Naive thymus-derived CD4-positive, alpha-beta T cell (primary cell): ENCODE measurements at regions of chrX and their contacts with region 1.

Region 1: DNA sequence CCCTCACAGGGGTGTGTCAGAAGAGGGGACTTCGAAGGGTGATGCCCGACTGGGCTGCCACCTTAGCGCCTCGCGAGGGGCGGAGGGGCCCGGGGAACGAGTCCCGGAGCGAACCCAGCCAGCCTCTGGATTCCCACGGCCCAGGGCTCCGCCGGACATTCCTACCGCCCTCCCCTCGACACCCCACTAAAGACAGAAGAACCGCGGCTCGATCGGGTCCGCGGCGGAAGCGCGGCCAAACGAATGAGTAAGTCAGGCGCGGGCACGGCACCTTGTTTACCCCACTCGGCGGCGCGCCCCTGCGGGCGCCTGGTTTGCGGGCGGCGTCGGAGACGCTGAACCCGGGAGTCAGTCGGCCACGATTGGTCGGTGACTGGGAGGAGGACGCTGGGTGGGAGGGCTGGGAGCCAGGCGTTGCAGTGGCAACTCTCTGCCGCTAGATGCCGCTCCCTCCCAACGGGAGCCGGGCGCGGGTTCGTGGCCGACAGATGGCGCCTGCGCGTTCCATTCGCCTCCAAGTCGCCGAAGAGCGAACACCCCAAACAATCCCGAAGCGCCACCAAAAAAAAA is 1.4 kb upstream of the STAG2 start:
- DNase-seq: peak; percentile 75 to 91 (median 87)
- ATAC-seq: peak; percentile 82
- H3K4me3 ChIP-seq: peak overlapping the region; percentile 87
- H3K4me3 Mint-ChIP-seq: peak overlapping the region; percentile 88 to 99 (median 97)
- H3K27ac ChIP-seq: peak overlapping the region; percentile 99
- H3K27ac Mint-ChIP-seq: peak overlapping the region; percentile 97 to 100 (median 98)
- H3K4me1 ChIP-seq: peaks cover under 1 to 2% of the 10 kb centered on the region in 2 donors
- H3K4me1 Mint-ChIP-seq: peaks cover 6 to 28% (median 17%) of the 10 kb centered on the region in 7 donors
- H3K27me3 ChIP-seq: no peaks in the 10 kb centered on the region
- H3K27me3 Mint-ChIP-seq: peaks cover 0 to 4% (median 0%) of the 10 kb centered on the region in 5 donors

Region 2: DNA sequence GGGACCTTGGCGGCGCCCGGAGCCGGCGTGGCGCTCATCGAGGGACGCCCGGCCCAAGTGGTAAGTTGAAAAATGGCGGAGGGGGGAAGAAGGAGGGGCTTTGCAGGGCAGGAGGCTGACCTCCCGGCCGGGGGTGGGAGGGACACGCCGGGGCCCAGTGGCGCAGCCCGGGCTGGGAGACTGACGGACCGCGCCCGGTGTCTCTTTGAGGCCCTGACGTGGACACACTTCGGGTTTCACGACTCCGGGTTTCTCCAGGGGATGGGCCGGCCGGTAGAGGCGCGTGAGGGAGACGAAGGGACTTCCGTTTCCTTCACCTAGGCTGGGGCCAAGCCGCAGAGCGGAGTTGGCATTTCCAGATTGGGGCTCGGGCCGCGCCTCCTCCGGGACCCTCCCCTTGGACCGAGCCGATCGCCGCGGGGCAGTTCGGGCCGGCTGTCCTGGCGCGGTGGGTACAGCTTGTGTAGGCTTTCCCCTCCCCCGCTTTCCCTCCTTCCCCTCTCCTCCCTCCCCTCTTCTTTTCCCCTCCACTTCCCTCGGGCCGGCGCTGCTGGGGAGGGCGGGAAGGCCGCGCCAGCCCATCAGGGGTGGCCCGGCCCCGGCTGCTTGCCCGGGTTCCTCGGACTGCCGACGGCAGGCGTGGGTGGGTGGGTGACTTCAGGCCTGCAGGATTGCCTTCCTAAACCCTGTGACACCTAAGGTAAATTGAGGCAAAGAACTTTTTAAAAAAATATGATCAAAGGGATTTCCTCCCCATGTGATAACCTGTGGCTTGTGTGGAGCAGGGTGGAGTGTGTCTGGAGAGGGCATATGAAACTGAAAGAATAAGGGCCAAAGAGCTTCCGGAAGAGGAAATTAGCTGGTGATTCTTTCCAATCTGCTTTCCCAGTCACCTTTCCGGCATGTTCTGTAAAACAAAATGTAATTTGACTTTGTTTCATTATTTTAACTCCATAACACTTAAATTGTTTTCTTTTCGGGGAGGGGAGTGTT is 100.0 kb before region 1 on chrX and contains the start of gene XIAP:
- CTCF ChIA-PET with region 1: no interaction called
- POLR2A ChIA-PET with region 1: interaction called, 7 read pairs
- intact Hi-C with region 1: loop called (anchors 1 kb)
- DNase-seq: peak; percentile 48 to 70 (median 62)
- ATAC-seq: peak; percentile 91
- H3K4me3 ChIP-seq: peak within 1 kb of the TSS; percentile 74
- H3K4me3 Mint-ChIP-seq: peak within 1 kb of the TSS; percentile 83 to 94 (median 90)
- H3K27ac ChIP-seq: peak within 1 kb of the TSS; percentile 93
- H3K27ac Mint-ChIP-seq: peak within 1 kb of the TSS; percentile 85 to 98 (median 94)
- H3K4me1 ChIP-seq: no peaks in the 10 kb centered on the region
- H3K4me1 Mint-ChIP-seq: peaks cover 10 to 29% (median 24%) of the 10 kb centered on the region in 7 donors
- H3K27me3 ChIP-seq: no peaks in the 10 kb centered on the region
- H3K27me3 Mint-ChIP-seq: no peaks in the 10 kb centered on the region
- total RNA-seq, gene XIAP: 23.5 to 56.1 (median 49.3) TPM

Region 3: GRCh38 chrX:124018023-124018422 is 57.9 kb after region 1 on chrX:
- CTCF ChIA-PET with region 1: interaction called, 5 read pairs
- POLR2A ChIA-PET with region 1: interaction called, 6 read pairs
- intact Hi-C with region 1: loop called (anchors 1 kb)
- DNase-seq: peak in 7 of 9 donors; percentile 3 to 40 (median 10)
- ATAC-seq: peak; percentile 59
- H3K4me3 ChIP-seq: no peak overlapping the region
- H3K4me3 Mint-ChIP-seq: peak overlapping the region in 5 of 10 donors; percentile 23 to 49 (median 36)
- H3K27ac ChIP-seq: no peak overlapping the region
- H3K27ac Mint-ChIP-seq: peak overlapping the region in 8 of 9 donors; percentile 43 to 75 (median 62)
- H3K4me1 ChIP-seq: peaks cover 0 to 7% of the 10 kb centered on the region in 2 donors
- H3K4me1 Mint-ChIP-seq: peaks cover 6 to 67% (median 44%) of the 10 kb centered on the region in 7 donors
- H3K27me3 ChIP-seq: no peaks in the 10 kb centered on the region
- H3K27me3 Mint-ChIP-seq: no peaks in the 10 kb centered on the region

Region 4: GRCh38 chrX:124211312-124211942 is 251.3 kb after region 1 on chrX:
- CTCF ChIA-PET with region 1: no interaction called
- POLR2A ChIA-PET with region 1: no interaction called
- intact Hi-C with region 1: loop called in 1 of 2 experiments (anchors 1 kb)
- DNase-seq: peak in 7 of 9 donors; percentile 27 to 63 (median 51)
- ATAC-seq: peak; percentile 83
- H3K4me3 ChIP-seq: no peak overlapping the region
- H3K4me3 Mint-ChIP-seq: no peak overlapping the region
- H3K27ac ChIP-seq: no peak overlapping the region
- H3K27ac Mint-ChIP-seq: peak overlapping the region in 1 of 9 donors; percentile 21
- H3K4me1 ChIP-seq: peaks cover 20 to 31% of the 10 kb centered on the region in 2 donors
- H3K4me1 Mint-ChIP-seq: peaks cover 19 to 51% (median 45%) of the 10 kb centered on the region in 7 donors
- H3K27me3 ChIP-seq: no peaks in the 10 kb centered on the region
- H3K27me3 Mint-ChIP-seq: peaks cover 0 to 3% (median 0%) of the 10 kb centered on the region in 5 donors

Region 5: DNA sequence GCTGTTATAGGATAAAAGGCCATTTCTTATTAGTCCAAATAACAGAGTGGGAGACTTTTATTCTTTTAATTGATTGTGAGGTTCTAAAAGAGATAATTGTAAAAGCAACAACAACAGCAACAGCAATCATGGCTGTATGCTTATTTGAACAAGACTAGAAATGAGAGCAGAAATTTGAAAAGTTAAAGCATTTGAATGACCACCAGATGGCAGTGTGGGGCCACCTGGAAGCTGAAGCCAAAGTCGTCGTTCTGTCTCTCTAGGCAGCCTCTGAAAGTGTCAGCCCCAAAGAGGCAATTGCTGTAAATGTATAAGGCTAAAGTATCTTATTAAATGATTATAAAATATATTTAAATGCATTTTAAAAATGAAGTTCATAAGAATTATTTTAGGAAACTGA is 428.4 kb after region 1 on chrX:
- CTCF ChIA-PET with region 1: no interaction called
- POLR2A ChIA-PET with region 1: no interaction called
- intact Hi-C with region 1: loop called in 1 of 2 experiments (anchors 5 kb)
- DNase-seq: peak in 8 of 9 donors; percentile 7 to 68 (median 53)
- ATAC-seq: peak; percentile 76
- H3K4me3 ChIP-seq: no peak overlapping the region
- H3K4me3 Mint-ChIP-seq: no peak overlapping the region
- H3K27ac ChIP-seq: no peak overlapping the region
- H3K27ac Mint-ChIP-seq: peak overlapping the region in 2 of 9 donors; percentile 32 to 62
- H3K4me1 ChIP-seq: no peaks in the 10 kb centered on the region
- H3K4me1 Mint-ChIP-seq: peaks cover 1 to 30% (median 19%) of the 10 kb centered on the region in 7 donors
- H3K27me3 ChIP-seq: no peaks in the 10 kb centered on the region
- H3K27me3 Mint-ChIP-seq: no peaks in the 10 kb centered on the region